Dorsolateral prefrontal cortex (tissue), 120 donors: ENCODE measurements at regions of chrX and their contacts with region 1.

Region 1: GRCh38 chrX:150365051-150365989 is 2.2 kb downstream of the MAMLD1 start:
- DNase-seq: peak; percentile 63 to 85 (median 73)
- H3K4me3 ChIP-seq: peak overlapping the region; percentile 31 to 77 (median 64)
- H3K27ac ChIP-seq: peak overlapping the region; percentile 65 to 95 (median 89)
- H3K27me3 ChIP-seq: peaks cover 0 to 52% (median 0%) of the 10 kb centered on the region in 45 donors
- CTCF ChIP-seq: peak; percentile 28 to 85 (median 66)

Region 2: DNA sequence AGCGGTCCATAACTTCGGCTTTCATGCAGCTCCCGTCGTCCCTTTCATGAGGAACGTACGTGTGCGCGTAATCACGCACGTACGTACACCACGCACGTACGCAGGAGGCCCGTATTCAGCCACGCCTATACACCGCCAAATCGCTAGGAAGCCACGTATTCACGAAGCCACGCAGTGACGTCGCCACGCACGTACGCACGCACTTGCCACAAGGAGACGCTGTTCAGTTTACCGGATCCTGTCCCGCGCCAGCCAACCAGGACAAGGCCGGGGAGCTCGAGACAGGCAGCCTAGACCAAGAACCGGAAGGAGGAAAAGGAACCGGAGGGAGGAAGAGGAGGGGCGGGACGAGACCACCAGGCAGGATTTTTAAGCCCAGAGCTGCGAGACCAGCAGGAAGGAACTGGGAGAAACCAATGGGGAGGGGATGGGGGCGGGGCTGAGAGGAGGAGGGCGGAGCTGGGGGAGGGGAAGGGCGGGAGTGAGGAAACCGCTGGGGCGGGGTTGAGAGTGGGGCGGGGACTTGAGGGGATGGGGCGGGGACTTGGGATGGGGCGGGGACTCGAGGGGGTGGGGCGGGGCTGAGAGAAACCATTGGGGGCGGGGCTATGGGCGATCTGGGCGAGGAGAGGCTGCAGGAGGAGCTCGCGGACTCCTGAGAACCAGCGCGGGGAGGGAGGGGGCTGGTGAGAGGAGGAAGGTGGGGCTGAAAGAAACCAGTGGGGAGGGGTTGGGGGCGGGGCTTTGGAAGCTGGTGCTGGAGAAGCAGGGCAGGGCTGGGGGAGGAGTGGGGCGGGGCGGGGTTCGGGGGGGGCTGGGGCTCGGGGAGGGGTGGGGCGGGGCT is 426.7 kb before region 1 on chrX and contains the start of gene EOLA2:
- intact Hi-C with region 1: loop called in 1 of 2 experiments (anchors 5 kb)
- DNase-seq: peak; percentile 88 to 98 (median 94)
- H3K4me3 ChIP-seq: peak within 1 kb of the TSS; percentile 47 to 85 (median 72)
- H3K27ac ChIP-seq: peak within 1 kb of the TSS in 56 of 59 donors; percentile 39 to 96 (median 86)
- H3K27me3 ChIP-seq: peaks cover 0 to 8% (median 0%) of the 10 kb centered on the region in 45 donors
- CTCF ChIP-seq: peak in 55 of 56 donors; percentile 23 to 66 (median 54)
- total RNA-seq, gene EOLA2: 18.9 to 40.5 (median 28.8) TPM

Region 3: GRCh38 chrX:150219374-150220185 is 145.7 kb before region 1 on chrX:
- intact Hi-C with region 1: loop called in 1 of 2 experiments (anchors 10 kb)
- DNase-seq: no peak
- H3K4me3 ChIP-seq: no peak overlapping the region
- H3K27ac ChIP-seq: no peak overlapping the region
- H3K27me3 ChIP-seq: peaks cover 0 to 80% (median 25%) of the 10 kb centered on the region in 45 donors
- CTCF ChIP-seq: no peak

Region 4: GRCh38 chrX:150465881-150466775 is 100.8 kb after region 1 on chrX:
- intact Hi-C with region 1: loop called in 1 of 2 experiments (anchors 2 kb)
- DNase-seq: peak in 1 of 10 donors; percentile 34
- H3K4me3 ChIP-seq: peak overlapping the region in 1 of 59 donors; percentile 8
- H3K27ac ChIP-seq: peak overlapping the region in 58 of 59 donors; percentile 1 to 95 (median 86)
- H3K27me3 ChIP-seq: peaks cover 0 to 63% (median under 1%) of the 10 kb centered on the region in 45 donors
- CTCF ChIP-seq: no peak

Region 5: DNA sequence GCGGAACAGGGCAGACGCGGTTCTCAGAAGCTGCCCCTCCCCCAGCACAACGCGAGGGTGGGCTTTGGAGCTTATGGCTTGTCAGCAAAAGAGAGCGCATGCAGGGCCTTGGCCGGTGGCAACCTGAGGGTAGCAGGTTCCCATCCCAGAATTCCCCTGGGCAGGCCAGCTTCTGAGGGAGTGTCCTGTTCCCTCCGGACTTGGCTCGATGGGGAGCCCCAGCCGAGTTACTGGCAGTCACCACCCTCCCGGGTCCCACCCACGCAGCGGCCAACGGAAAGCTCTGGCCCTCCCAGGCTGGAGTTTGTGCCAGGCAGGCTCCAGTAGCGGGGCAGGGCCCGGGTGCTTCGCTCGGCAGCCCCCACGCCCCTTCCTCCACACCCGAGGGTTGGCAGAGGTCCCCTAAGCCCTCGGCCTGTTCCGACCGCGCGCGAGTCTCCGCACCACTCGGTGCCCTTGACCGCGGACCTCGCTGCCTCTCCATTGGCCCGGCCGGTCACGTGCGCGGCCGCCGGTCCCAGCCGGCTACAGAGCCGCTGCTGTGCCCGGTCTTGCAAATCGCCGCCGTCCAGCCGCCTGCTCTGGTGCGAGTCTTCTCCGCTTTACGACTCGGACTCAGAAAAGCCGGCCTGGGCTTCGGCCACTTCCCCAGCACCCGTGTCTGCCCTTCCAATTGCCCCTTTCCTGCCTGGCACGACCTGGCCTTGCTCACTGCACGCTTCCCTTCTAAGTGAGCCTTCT is 182.2 kb after region 1 on chrX:
- intact Hi-C with region 1: loop called in 1 of 2 experiments (anchors 10 kb)
- DNase-seq: peak; percentile 56 to 86 (median 66)
- H3K4me3 ChIP-seq: peak overlapping the region; percentile 13 to 62 (median 46)
- H3K27ac ChIP-seq: peak overlapping the region in 58 of 59 donors; percentile 29 to 93 (median 83)
- H3K27me3 ChIP-seq: peaks cover 0 to 58% (median 10%) of the 10 kb centered on the region in 45 donors
- CTCF ChIP-seq: peak in 1 of 56 donors; percentile 35

Region 6: DNA sequence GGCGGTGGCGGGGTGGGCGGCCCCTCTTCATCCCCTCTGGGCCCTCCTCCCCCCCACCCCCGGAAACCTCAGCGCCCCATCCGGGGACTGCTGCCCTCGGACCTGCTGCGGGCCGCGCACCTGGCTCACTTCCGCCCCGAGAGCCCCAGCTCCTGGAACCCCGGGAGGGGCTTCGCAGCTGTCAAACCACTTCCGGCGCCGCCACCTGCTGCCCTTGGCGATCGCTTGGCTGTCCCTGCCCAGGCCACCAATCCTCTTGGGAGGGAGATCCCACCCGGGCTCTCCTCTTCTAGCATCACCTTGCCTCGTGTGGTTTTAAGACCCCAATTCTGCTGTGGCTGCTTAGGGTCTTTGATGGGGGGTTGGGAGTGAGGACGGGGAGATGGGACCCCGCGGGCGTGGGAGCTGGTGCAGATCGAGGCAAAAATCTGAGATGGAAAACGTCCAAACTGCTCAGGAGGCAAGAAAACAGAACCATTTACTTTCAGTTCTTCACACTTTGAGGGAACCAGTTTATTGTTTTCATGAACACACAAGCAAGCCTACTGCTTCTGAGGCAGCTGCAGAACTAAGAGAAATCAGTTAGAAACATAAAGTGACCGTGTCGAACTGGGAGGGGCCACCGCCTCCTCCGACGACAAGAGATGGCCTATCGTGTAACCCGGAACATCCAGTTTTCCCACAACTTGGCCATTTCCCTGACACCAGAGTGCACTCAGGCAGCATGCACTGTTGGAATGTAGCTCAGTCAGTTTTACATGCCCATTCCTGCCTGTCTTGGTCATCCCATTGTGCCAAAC is 328.7 kb after region 1 on chrX:
- intact Hi-C with region 1: loop called (anchors 10 kb)
- DNase-seq: peak in 5 of 10 donors; percentile 13 to 47 (median 23)
- H3K4me3 ChIP-seq: peak overlapping the region; percentile 23 to 73 (median 60)
- H3K27ac ChIP-seq: peak overlapping the region in 52 of 59 donors; percentile 22 to 87 (median 76)
- H3K27me3 ChIP-seq: peaks cover 0 to 60% (median 3%) of the 10 kb centered on the region in 45 donors
- CTCF ChIP-seq: no peak